Activated naive CD4-positive, alpha-beta T cell treated with anti-CD3 and anti-CD28 coated beads for 36 hours (primary cell): ENCODE measurements at regions of chr6 and their contacts with region 1.

Region 1: GRCh38 chr6:116561377-116562018 is 7.9 kb downstream of the CALHM4 start:
- DNase-seq: peak; percentile 80
- H3K4me3 Mint-ChIP-seq: no peak overlapping the region
- H3K27ac Mint-ChIP-seq: no peak overlapping the region
- H3K4me1 Mint-ChIP-seq: peaks cover 3% of the 10 kb centered on the region
- H3K27me3 Mint-ChIP-seq: peaks cover 11% of the 10 kb centered on the region

Region 2: GRCh38 chr6:116268589-116269293 is 292.8 kb before region 1 on chr6:
- CTCF ChIA-PET with region 1: interaction called, 8 read pairs
- intact Hi-C with region 1: loop called (anchors 1 kb)
- DNase-seq: no peak
- H3K4me3 Mint-ChIP-seq: no peak overlapping the region
- H3K27ac Mint-ChIP-seq: no peak overlapping the region
- H3K4me1 Mint-ChIP-seq: peaks cover 27% of the 10 kb centered on the region
- H3K27me3 Mint-ChIP-seq: no peaks in the 10 kb centered on the region

Region 3: DNA sequence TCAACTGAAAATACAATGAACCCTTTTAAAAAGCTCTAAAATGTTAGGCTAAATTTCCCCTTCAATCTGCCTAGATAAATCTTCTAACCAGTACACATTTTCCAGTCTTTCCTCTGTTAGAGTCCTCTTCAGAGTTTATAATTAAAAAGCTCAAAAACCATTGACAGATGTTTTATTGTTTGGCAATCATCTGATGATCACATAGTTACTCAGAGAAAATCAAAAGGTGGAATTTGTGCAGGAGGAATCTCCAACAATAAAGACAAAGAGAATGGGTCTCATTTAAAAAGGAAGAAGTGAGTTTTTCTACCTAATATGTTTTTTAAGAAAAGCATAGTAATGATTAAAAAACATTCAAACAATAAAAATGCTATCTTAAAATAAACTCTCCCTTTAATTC is 19.1 kb before region 1 on chr6:
- CTCF ChIA-PET with region 1: interaction called, 23 read pairs
- intact Hi-C with region 1: no loop called
- DNase-seq: no peak
- H3K4me3 Mint-ChIP-seq: no peak overlapping the region
- H3K27ac Mint-ChIP-seq: no peak overlapping the region
- H3K4me1 Mint-ChIP-seq: no peaks in the 10 kb centered on the region
- H3K27me3 Mint-ChIP-seq: peaks cover 12% of the 10 kb centered on the region

Region 4: DNA sequence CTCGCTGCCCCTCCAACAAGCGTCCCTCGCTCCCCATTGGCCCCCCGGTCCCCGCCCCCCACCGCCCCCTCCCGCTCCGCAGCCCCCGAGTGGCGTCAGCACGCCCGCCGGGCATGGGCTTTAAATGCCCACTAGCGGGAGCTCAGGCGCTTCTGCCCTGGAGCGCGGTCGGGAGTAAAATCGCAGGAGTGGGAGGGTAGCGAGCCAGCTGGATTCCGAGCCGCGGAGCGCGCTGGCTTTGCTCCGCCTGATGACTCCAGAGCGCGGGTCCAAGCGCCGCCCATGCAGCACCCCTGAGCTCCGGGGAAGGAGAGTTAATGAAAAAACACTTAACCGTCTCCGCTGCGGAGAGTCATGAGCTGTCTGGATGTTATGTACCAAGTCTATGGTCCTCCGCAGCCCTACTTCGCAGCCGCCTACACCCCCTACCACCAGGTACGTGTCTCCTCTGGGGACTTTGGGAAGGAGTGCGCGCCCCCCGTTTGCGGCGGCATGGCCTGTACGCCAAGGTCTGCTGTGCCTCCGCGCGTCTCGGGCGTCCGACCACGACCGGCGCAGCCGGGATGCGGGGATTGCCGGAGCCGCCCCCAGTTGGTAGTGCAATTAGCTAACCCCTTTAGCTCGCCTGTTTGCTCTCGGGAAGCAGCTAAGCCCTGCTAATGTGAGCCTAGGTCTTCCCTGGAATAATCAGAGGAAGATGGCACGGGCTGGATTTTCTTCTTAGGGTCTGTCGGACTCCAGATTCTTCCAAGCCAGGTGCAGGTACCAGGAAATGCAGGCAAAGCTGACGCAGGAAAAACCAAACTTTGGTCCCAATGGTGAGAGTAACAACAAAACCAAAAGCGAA is 704.1 kb after region 1 on chr6 and contains the start of gene VGLL2:
- CTCF ChIA-PET with region 1: no interaction called
- intact Hi-C with region 1: no loop called
- DNase-seq: no peak
- H3K4me3 Mint-ChIP-seq: peak within 1 kb of the TSS; percentile 51
- H3K27ac Mint-ChIP-seq: no peak within 1 kb of the TSS
- H3K4me1 Mint-ChIP-seq: peaks cover 8% of the 10 kb centered on the region
- H3K27me3 Mint-ChIP-seq: peaks cover 85% of the 10 kb centered on the region
- total RNA-seq, gene VGLL2: not detected

Region 5: GRCh38 chr6:118335325-118335816 is 1773.9 kb after region 1 on chr6:
- CTCF ChIA-PET with region 1: no interaction called
- intact Hi-C with region 1: no loop called
- DNase-seq: no peak
- H3K4me3 Mint-ChIP-seq: no peak overlapping the region
- H3K27ac Mint-ChIP-seq: no peak overlapping the region
- H3K4me1 Mint-ChIP-seq: no peaks in the 10 kb centered on the region
- H3K27me3 Mint-ChIP-seq: no peaks in the 10 kb centered on the region